CD8-positive, alpha-beta T cell (primary cell): ENCODE measurements at regions of chr3 and their contacts with region 1.

Region 1: GRCh38 chr3:38136777-38137614 is at the start of gene ACAA1:
- DNase-seq: peak; percentile 93 to 99 (median 97)
- ATAC-seq: peak; percentile 86
- H3K4me3 ChIP-seq: peak within 1 kb of the TSS; percentile 94 to 99
- H3K4me3 Mint-ChIP-seq: peak within 1 kb of the TSS; percentile 93
- H3K27ac ChIP-seq: peak within 1 kb of the TSS; percentile 74 to 88
- H3K27ac Mint-ChIP-seq: peak within 1 kb of the TSS; percentile 98
- H3K4me1 ChIP-seq: peaks cover 45% of the 10 kb centered on the region
- H3K4me1 Mint-ChIP-seq: peaks cover 70% of the 10 kb centered on the region
- H3K27me3 ChIP-seq: no peaks in the 10 kb centered on the region
- H3K27me3 Mint-ChIP-seq: no peaks in the 10 kb centered on the region
- CTCF ChIP-seq: no peak
- total RNA-seq, gene ACAA1: 49.4 to 49.9 TPM

Region 2: GRCh38 chr3:37689645-37690356 is 447.2 kb before region 1 on chr3:
- CTCF ChIA-PET with region 1: no interaction called
- POLR2A ChIA-PET with region 1: no interaction called
- intact Hi-C with region 1: no loop called
- DNase-seq: no peak
- ATAC-seq: no peak
- H3K4me3 ChIP-seq: no peak overlapping the region
- H3K4me3 Mint-ChIP-seq: no peak overlapping the region
- H3K27ac ChIP-seq: no peak overlapping the region
- H3K27ac Mint-ChIP-seq: no peak overlapping the region
- H3K4me1 ChIP-seq: no peaks in the 10 kb centered on the region
- H3K4me1 Mint-ChIP-seq: no peaks in the 10 kb centered on the region
- H3K27me3 ChIP-seq: no peaks in the 10 kb centered on the region
- H3K27me3 Mint-ChIP-seq: no peaks in the 10 kb centered on the region
- CTCF ChIP-seq: no peak

Region 3: GRCh38 chr3:38039101-38039898 is 97.7 kb before region 1 on chr3 and contains the start of gene DLEC1:
- CTCF ChIA-PET with region 1: no interaction called
- POLR2A ChIA-PET with region 1: interaction called, 11 read pairs
- intact Hi-C with region 1: no loop called
- DNase-seq: peak; percentile 61 to 95 (median 86)
- ATAC-seq: peak; percentile 61
- H3K4me3 ChIP-seq: peak within 1 kb of the TSS; percentile 65 to 67
- H3K4me3 Mint-ChIP-seq: peak within 1 kb of the TSS; percentile 83
- H3K27ac ChIP-seq: peak within 1 kb of the TSS; percentile 62 to 90
- H3K27ac Mint-ChIP-seq: peak within 1 kb of the TSS; percentile 96
- H3K4me1 ChIP-seq: peaks cover 25% of the 10 kb centered on the region
- H3K4me1 Mint-ChIP-seq: peaks cover 27% of the 10 kb centered on the region
- H3K27me3 ChIP-seq: no peaks in the 10 kb centered on the region
- H3K27me3 Mint-ChIP-seq: no peaks in the 10 kb centered on the region
- CTCF ChIP-seq: no peak
- total RNA-seq, gene DLEC1: 1.8 to 1.9 TPM

Region 4: GRCh38 chr3:38157595-38157994 is 20.6 kb after region 1 on chr3:
- CTCF ChIA-PET with region 1: interaction called, 4 read pairs
- POLR2A ChIA-PET with region 1: interaction called, 103 read pairs
- intact Hi-C with region 1: loop called in 1 of 2 experiments (anchors 2 kb)
- DNase-seq: no peak
- ATAC-seq: no peak
- H3K4me3 ChIP-seq: no peak overlapping the region
- H3K4me3 Mint-ChIP-seq: no peak overlapping the region
- H3K27ac ChIP-seq: no peak overlapping the region
- H3K27ac Mint-ChIP-seq: no peak overlapping the region
- H3K4me1 ChIP-seq: no peaks in the 10 kb centered on the region
- H3K4me1 Mint-ChIP-seq: peaks cover 2% of the 10 kb centered on the region
- H3K27me3 ChIP-seq: no peaks in the 10 kb centered on the region
- H3K27me3 Mint-ChIP-seq: no peaks in the 10 kb centered on the region
- CTCF ChIP-seq: no peak

Region 5: DNA sequence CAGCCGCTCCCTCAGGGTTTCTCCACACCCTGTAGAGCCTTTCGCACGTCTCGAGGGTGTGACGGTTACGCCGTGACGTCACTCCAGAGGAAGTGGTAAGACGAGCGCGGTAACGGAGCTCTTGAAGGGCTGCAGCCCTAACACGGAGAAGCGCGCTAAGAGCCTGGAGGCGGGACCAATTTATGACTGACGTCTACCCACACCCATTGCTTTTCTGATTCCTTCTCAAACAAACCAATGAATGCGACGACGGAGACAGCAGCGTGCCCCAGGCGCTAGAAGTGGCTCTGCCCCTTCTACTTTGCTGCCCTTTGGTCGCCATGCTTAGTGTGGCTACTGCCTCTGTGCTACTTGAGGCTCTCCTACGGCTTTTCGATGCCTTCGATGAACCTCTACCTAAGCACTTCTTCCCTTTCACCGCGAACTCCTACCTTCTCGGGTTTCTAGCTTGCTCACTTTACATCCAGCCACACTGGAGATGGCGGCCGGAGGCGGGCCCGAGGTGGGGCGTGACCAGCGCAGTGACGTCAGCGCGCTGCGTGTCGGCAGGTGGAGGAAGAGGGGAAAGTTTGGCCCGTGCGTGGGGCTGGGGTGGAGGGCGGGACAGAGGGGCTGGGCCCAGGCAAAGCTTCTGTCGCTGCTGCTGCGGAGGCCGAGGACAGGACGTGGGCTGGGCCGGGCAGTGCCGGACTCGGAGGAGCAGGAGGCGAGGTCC is 28.1 kb after region 1 on chr3 and contains the start of gene OXSR1:
- CTCF ChIA-PET with region 1: interaction called, 17 read pairs
- POLR2A ChIA-PET with region 1: interaction called, 103 read pairs
- intact Hi-C with region 1: loop called (anchors 1 kb)
- DNase-seq: peak; percentile 91 to 100 (median 97)
- ATAC-seq: peak; percentile 89
- H3K4me3 ChIP-seq: peak within 1 kb of the TSS; percentile 76 to 84
- H3K4me3 Mint-ChIP-seq: peak within 1 kb of the TSS; percentile 91
- H3K27ac ChIP-seq: peak within 1 kb of the TSS; percentile 94 to 99
- H3K27ac Mint-ChIP-seq: peak within 1 kb of the TSS; percentile 100
- H3K4me1 ChIP-seq: peaks cover 23% of the 10 kb centered on the region
- H3K4me1 Mint-ChIP-seq: peaks cover 46% of the 10 kb centered on the region
- H3K27me3 ChIP-seq: no peaks in the 10 kb centered on the region
- H3K27me3 Mint-ChIP-seq: no peaks in the 10 kb centered on the region
- CTCF ChIP-seq: no peak
- total RNA-seq, gene OXSR1: 45.4 to 45.6 TPM

Region 6: DNA sequence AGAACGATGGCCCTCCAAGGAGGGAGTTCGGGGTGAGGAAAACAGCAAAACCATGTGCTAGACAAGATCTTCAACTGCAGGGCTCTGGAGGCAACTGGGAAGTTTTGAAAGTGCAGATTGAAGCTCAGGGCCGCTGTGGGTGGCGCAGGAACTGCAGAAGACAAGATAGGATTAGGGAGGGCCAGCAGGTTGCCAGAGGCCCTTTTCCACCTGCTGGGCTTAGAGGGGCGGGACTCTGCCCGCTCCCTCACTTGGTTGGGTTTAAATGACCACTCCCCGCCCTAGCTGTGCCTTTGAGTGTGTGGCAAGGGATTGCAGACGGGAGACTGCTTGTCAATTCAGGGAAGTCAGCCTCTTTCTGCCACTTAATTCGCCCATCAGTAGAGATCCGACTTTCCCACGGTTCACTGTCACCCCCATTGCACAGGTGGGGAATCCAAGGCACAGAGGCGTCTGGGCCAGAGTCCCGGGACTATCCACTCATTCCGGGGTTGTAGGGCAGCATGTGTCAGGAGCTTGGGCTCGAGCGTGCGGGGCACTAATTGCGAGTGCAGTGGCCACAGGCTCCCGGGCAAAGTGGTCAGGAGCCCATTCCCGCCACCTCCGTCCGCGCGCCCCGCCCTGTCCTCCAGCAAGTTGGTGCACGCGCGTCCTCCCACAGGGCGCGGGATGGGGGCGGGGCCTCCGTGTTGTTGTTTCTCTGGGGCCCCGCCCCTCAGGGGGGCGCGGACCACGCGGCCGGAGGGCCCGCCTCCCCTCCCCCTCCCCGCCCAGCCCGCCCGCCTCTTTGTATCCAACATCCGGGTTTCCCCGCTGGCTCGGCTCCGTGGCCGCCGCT is 316.3 kb after region 1 on chr3 and contains the start of gene ACVR2B:
- CTCF ChIA-PET with region 1: no interaction called
- POLR2A ChIA-PET with region 1: interaction called, 3 read pairs
- intact Hi-C with region 1: loop called in 1 of 2 experiments (anchors 5 kb)
- DNase-seq: peak; percentile 15 to 82 (median 66)
- ATAC-seq: peak; percentile 62
- H3K4me3 ChIP-seq: peak within 1 kb of the TSS; percentile 55 to 62
- H3K4me3 Mint-ChIP-seq: peak within 1 kb of the TSS; percentile 98
- H3K27ac ChIP-seq: peak within 1 kb of the TSS in 1 of 2 experiments; percentile 32
- H3K27ac Mint-ChIP-seq: peak within 1 kb of the TSS; percentile 92
- H3K4me1 ChIP-seq: peaks cover 18% of the 10 kb centered on the region
- H3K4me1 Mint-ChIP-seq: peaks cover 30% of the 10 kb centered on the region
- H3K27me3 ChIP-seq: peaks cover 0 to 3% of the 10 kb centered on the region in 2 experiments
- H3K27me3 Mint-ChIP-seq: no peaks in the 10 kb centered on the region
- CTCF ChIP-seq: no peak
- total RNA-seq, gene ACVR2B: 2.1 to 3.0 TPM

Region 7: GRCh38 chr3:39406368-39407258 is 1269.6 kb after region 1 on chr3 and contains the start of gene RPSA:
- CTCF ChIA-PET with region 1: no interaction called
- POLR2A ChIA-PET with region 1: no interaction called
- intact Hi-C with region 1: loop called in 1 of 2 experiments (anchors 5 kb)
- DNase-seq: peak; percentile 88 to 99 (median 94)
- ATAC-seq: peak; percentile 90
- H3K4me3 ChIP-seq: peak within 1 kb of the TSS; percentile 67 to 75
- H3K4me3 Mint-ChIP-seq: peak within 1 kb of the TSS; percentile 89
- H3K27ac ChIP-seq: peak within 1 kb of the TSS; percentile 83 to 90
- H3K27ac Mint-ChIP-seq: peak within 1 kb of the TSS; percentile 96
- H3K4me1 ChIP-seq: peaks cover 40% of the 10 kb centered on the region
- H3K4me1 Mint-ChIP-seq: peaks cover 48% of the 10 kb centered on the region
- H3K27me3 ChIP-seq: no peaks in the 10 kb centered on the region
- H3K27me3 Mint-ChIP-seq: no peaks in the 10 kb centered on the region
- CTCF ChIP-seq: peak; percentile 45
- total RNA-seq, gene RPSA: 1,951 to 2,020 TPM